Posterior cingulate gyrus (tissue), 11 donors: ENCODE measurements at regions of chr19 and their contacts with region 1.

Region 1: DNA sequence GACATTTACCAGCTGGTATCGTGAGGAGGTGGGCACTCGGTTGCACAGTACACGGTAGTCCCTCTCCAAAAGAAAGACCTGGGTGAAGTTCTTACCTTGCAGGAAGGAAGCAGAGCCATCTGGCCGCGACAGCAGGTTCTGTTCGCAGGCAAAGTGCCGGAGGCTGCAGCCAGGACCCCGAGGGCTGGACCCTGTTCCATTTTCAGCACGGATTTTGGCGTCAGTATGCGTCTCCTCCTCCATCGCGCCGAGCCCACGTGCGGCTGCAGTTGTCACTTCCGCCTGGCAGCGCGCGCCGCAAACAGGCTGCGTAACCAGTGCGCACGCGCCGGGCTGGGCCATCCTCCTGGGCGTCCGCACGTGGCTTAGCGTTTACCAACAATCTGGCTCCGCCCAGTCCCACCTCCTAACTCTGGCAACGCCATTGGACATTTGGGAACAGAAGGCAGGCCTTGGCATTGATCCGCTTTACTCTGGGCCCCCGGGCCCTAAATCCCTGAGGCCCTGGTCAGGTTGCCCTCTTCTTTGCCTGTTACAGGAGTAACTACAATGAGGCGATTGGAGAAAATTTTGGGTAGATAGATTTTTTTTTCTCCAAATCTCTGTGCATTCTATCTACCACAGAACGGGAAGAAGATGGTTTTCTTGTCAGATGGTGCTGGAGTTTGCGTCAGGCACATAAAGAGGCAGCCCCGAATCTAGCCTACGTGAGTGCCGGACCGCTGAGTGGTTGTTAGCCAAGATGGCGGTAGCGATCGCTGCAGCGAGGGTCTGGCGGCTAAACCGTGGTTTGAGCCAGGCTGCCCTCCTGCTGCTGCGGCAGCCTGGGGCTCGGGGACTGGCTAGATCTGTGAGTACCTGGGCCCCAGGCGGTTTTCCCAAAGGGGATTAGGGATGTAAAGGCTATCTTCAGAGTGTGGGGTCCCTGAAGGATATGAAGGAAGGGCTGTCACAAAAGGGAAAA is at the starts of genes BCKDHA and EXOSC5:
- DNase-seq: peak; percentile 98 to 100 (median 99)

Region 2: GRCh38 chr19:41363753-41364523 is 33.4 kb before region 1 on chr19 and contains the start of gene B9D2:
- intact Hi-C with region 1: loop called (anchors 2 kb)
- DNase-seq: peak; percentile 95 to 99 (median 97)